Adrenal gland (tissue), 19 donors: ENCODE measurements at regions of chr17 and their contacts with region 1.

Region 1: DNA sequence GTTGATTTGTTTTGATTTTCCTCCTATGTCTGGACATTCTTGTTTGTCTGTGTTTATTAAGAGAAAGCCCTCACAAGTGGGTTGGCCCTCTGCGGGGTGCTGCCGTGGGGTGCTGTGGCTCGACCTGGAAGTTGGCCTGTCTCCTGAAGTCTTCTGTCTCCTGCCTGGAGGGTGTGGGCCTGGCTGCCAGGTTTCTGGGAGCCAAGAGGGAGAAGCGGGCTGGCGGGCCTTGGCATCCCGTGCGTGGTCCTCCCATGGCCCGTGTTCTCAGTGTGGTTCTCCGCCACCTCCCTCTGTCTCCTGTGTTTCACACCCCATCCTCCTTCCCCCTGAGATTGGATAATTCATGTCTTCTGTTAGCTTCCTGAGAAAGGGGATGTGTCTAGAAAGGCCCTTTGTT is 69.6 kb downstream of the RNF213 start:
- DNase-seq: no peak
- H3K4me3 ChIP-seq: no peak overlapping the region
- H3K27ac ChIP-seq: no peak overlapping the region
- H3K4me1 ChIP-seq: no peaks in the 10 kb centered on the region
- H3K27me3 ChIP-seq: no peaks in the 10 kb centered on the region
- CTCF ChIP-seq: no peak
- POLR2A ChIP-seq: no peak

Region 2: GRCh38 chr17:80219013-80219762 is 111.1 kb before region 1 on chr17:
- intact Hi-C with region 1: no loop called
- DNase-seq: peak; percentile 74 to 91 (median 86)
- H3K4me3 ChIP-seq: peak overlapping the region; percentile 14 to 92 (median 78)
- H3K27ac ChIP-seq: peak overlapping the region; percentile 32 to 95 (median 88)
- H3K4me1 ChIP-seq: peaks cover 15 to 27% of the 10 kb centered on the region in 2 donors
- H3K27me3 ChIP-seq: no peaks in the 10 kb centered on the region
- CTCF ChIP-seq: no peak
- POLR2A ChIP-seq: no peak

Region 3: GRCh38 chr17:80289616-80290015 is 40.7 kb before region 1 on chr17:
- intact Hi-C with region 1: loop called in 1 of 2 experiments (anchors 2 kb)
- DNase-seq: no peak
- H3K4me3 ChIP-seq: no peak overlapping the region
- H3K27ac ChIP-seq: peak overlapping the region in 1 of 5 donors; percentile 46
- H3K4me1 ChIP-seq: peaks cover 0 to 7% of the 10 kb centered on the region in 2 donors
- H3K27me3 ChIP-seq: no peaks in the 10 kb centered on the region
- CTCF ChIP-seq: no peak
- POLR2A ChIP-seq: no peak